Activated CD4-positive, alpha-beta memory T cell treated with anti-CD3 and anti-CD28 coated beads, Interleukin-2, amount 10 ng/mL, durations not matched to agents 7 days and 5 days (primary cell): ENCODE measurements at regions of chr1 and their contacts with region 1.

Region 1: DNA sequence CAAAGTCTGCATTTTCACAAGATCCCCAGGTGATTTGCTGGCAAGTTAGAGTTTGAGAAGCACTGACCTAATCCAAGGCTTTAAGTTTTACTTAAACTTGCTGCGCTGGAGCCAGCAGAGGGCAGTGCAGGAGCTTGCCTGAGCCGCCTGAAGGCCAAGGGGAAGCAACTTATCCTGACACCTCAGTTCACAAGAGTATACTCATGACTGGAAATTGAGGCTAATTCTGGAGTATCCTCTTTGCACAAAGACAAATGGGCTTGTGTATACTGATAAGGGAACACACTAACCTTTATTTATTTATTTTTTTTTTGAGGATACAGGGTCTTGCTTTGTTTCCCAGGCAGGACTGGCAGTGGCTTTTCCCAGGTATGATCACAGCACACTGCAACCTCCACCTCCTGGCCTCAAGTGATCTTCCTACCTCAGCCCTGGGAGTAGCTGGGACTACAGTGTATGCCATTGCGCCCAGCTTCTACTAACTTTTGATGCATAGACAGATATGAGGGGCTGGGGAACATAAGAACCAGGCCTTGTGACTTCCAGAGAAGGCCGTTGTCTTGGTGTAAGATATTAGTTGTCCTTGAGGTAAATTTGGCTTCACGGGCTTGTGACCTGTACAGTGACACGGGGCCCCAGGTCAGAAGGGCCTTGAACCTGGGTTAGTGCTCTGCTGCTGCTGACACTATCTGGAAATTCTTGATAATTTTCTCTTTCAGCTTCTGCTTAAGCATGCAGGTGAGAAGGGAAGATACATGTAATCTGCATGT is 29.0 kb upstream of the SLAMF1 start:
- DNase-seq: peak; percentile 82
- H3K4me3 Mint-ChIP-seq: peak overlapping the region; percentile 53
- H3K27ac Mint-ChIP-seq: peak overlapping the region; percentile 61
- H3K4me1 Mint-ChIP-seq: peaks cover 33% of the 10 kb centered on the region
- H3K27me3 Mint-ChIP-seq: no peaks in the 10 kb centered on the region

Region 2: GRCh38 chr1:160209321-160210046 is 466.3 kb before region 1 on chr1:
- CTCF ChIA-PET with region 1: no interaction called
- POLR2A ChIA-PET with region 1: no interaction called
- DNase-seq: no peak
- H3K4me3 Mint-ChIP-seq: no peak overlapping the region
- H3K27ac Mint-ChIP-seq: peak overlapping the region; percentile 44
- H3K4me1 Mint-ChIP-seq: peaks cover 38% of the 10 kb centered on the region
- H3K27me3 Mint-ChIP-seq: no peaks in the 10 kb centered on the region

Region 3: DNA sequence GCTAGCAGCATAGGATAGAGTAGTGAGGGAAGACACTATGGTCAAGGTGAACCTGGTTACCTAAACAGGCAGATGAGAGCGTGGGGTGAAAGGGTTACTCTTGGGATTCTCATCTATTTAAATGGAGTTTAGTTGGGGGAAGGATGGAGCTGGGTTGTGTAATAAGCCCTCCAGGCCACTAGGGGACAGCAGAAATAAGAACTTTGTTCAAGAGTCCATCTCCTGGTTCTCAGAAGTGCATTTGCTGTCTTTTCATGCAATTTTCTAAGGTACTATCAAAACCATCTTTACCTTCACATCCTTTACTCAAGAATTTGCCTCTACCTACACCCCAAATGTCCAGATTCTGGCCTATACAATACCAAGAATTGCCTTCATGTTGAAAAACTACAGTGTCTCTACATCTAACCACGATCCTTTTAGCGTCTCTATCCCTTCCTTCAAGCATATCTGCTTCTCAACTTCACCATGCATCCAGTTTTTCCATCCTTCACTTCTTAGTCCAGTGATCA is 57.0 kb before region 1 on chr1:
- CTCF ChIA-PET with region 1: interaction called, 20 read pairs
- POLR2A ChIA-PET with region 1: interaction called, 41 read pairs
- DNase-seq: no peak
- H3K4me3 Mint-ChIP-seq: no peak overlapping the region
- H3K27ac Mint-ChIP-seq: peak overlapping the region; percentile 48
- H3K4me1 Mint-ChIP-seq: peaks cover 75% of the 10 kb centered on the region
- H3K27me3 Mint-ChIP-seq: no peaks in the 10 kb centered on the region

Region 4: GRCh38 chr1:160637821-160638539 is 37.8 kb before region 1 on chr1:
- CTCF ChIA-PET with region 1: interaction called, 46 read pairs
- POLR2A ChIA-PET with region 1: interaction called, 70 read pairs
- DNase-seq: peak; percentile 73
- H3K4me3 Mint-ChIP-seq: peak overlapping the region; percentile 70
- H3K27ac Mint-ChIP-seq: peak overlapping the region; percentile 95
- H3K4me1 Mint-ChIP-seq: peaks cover 95% of the 10 kb centered on the region
- H3K27me3 Mint-ChIP-seq: no peaks in the 10 kb centered on the region

Region 5: DNA sequence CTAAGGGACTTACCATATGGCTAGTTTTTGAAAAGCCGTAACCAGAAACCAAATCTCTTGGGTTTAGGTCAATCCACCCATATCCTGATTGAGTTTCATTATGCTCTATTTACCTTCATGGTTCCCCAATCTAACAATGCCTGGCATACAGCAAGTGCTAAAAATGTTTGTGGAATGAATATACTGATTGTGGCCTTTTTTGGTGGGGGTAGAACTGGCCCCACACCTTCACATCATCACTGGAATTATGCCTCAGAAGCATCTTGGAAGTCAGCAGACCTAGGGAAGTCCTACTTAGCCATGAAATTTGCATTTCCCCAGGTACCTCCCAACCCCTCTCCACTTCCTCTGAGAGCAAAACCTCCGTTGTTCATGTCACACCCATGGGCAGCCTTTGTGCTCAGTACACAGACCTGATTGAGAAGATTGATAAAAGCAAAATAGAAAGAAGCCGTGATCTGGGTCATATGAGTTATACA is 11.2 kb before region 1 on chr1:
- CTCF ChIA-PET with region 1: interaction called, 55 read pairs
- POLR2A ChIA-PET with region 1: interaction called, 47 read pairs
- DNase-seq: peak; percentile 66
- H3K4me3 Mint-ChIP-seq: peak overlapping the region; percentile 62
- H3K27ac Mint-ChIP-seq: peak overlapping the region; percentile 91
- H3K4me1 Mint-ChIP-seq: peaks cover 77% of the 10 kb centered on the region
- H3K27me3 Mint-ChIP-seq: no peaks in the 10 kb centered on the region

Region 6: DNA sequence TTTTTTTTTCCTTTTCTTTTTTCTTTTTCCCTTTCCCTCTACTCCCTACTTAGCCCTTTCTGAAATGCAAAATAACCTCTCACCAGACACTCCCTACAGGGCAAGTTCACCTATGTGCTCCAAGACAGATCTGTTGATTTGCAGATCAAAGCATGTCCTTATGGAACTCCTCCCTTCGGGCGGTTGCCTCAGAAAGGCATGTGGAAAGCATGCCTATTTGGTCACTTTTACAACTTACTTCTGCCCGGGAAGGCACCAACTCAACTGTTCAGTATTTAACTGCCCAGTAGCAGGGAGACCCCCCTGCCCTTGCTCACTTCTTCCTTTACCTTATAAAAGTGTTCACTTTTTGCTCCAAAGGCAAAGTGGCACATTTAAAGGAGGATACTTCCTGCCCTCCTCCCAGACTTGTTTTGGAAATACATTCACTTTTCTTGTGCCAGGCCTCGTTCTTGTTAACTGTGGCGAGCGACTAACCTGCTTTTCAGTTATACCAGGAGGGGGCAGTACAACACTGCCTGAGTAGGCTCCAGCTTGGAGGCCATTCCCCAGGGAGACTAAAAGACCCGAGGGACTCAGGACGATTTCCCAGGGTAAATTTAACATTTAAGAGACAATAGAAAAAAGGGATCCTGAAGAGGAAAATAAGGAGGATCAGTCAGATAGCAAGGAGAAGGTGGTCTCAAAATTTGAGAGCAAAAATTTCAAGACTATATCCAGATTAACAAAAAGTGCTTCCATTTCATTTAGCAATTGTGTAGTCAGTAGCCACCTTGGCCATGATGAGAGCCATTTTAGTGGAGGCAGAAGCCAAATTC is 50.9 kb after region 1 on chr1:
- CTCF ChIA-PET with region 1: interaction called, 86 read pairs
- POLR2A ChIA-PET with region 1: interaction called, 6 read pairs
- DNase-seq: peak; percentile 70
- H3K4me3 Mint-ChIP-seq: no peak overlapping the region
- H3K27ac Mint-ChIP-seq: no peak overlapping the region
- H3K4me1 Mint-ChIP-seq: peaks cover 31% of the 10 kb centered on the region
- H3K27me3 Mint-ChIP-seq: no peaks in the 10 kb centered on the region